Activated T-helper 2 cell treated with anti-CD3 and anti-CD28 coated beads, Interferon-gamma antibody, Interleukin-2, Interleukin-4, amounts not matched to agents 10 μg/mL and 5 μg/mL and 100 μg/mL, durations not matched to agents 14 hours and 24 hours and 36 hours (primary cell): ENCODE measurements at regions of chr19 and their contacts with region 1.

Region 1: GRCh38 chr19:40444192-40445028 is at the start of gene SERTAD3:
- DNase-seq: peak; percentile 96
- H3K4me3 Mint-ChIP-seq: peak within 1 kb of the TSS; percentile 99
- H3K27ac Mint-ChIP-seq: peak within 1 kb of the TSS; percentile 97
- H3K4me1 Mint-ChIP-seq: peaks cover 14% of the 10 kb centered on the region
- H3K27me3 Mint-ChIP-seq: no peaks in the 10 kb centered on the region
- total RNA-seq, gene SERTAD3: 12.5 and 13.1 TPM in 2 replicates

Region 2: GRCh38 chr19:40285353-40286234 is 158.8 kb before region 1 on chr19:
- intact Hi-C with region 1: loop called (anchors 1 kb)
- DNase-seq: peak; percentile 99
- H3K4me3 Mint-ChIP-seq: peak overlapping the region; percentile 85
- H3K27ac Mint-ChIP-seq: peak overlapping the region; percentile 99
- H3K4me1 Mint-ChIP-seq: peaks cover 28% of the 10 kb centered on the region
- H3K27me3 Mint-ChIP-seq: no peaks in the 10 kb centered on the region

Region 3: DNA sequence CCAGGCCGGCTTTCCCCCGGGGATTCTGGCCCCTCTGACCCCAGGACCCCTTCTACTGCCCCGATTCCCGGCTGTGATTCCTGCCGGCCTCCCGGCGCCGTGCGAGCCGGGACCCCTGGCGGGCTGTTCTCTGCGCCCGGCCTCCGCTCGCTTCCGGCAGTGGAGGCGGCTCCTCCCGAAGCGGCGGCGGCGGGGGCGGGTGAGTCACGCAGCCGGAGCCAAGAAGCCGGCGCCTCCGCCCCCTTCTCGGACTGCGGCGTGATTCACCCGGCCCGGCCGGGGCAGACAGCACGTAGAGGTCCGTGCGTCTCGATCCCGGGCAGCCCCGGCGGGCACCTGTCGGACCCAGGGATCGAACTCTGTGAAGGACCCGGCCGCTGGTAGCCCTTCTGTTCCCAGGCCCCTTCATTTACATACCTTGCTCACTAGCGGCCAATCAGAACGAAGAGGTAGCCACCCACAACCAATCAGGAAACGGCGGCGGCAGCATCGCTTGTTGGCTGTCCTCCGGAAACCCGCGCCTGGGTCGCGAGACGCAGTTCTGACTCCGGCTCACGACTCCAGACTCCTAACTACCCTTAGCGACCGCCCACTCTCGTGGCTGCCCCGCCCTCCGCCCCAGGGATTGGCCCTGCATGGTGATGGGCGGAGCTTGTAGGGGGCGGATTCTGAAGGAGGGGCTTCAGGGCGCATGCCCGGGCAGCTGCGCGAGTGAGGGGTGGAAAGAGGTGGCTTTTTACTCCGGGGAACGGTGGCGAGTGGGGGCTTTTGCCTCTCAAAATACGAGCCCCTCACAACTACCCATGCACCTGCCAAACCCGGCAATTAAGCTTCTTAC is 18.7 kb before region 1 on chr19 and contains the start of gene SERTAD1:
- intact Hi-C with region 1: loop called (anchors 1 kb)
- DNase-seq: peak; percentile 100
- H3K4me3 Mint-ChIP-seq: peak within 1 kb of the TSS; percentile 97
- H3K27ac Mint-ChIP-seq: peak within 1 kb of the TSS; percentile 96
- H3K4me1 Mint-ChIP-seq: peaks cover 18% of the 10 kb centered on the region
- H3K27me3 Mint-ChIP-seq: no peaks in the 10 kb centered on the region
- total RNA-seq, gene SERTAD1: 17.5 and 18.1 TPM in 2 replicates

Region 4: DNA sequence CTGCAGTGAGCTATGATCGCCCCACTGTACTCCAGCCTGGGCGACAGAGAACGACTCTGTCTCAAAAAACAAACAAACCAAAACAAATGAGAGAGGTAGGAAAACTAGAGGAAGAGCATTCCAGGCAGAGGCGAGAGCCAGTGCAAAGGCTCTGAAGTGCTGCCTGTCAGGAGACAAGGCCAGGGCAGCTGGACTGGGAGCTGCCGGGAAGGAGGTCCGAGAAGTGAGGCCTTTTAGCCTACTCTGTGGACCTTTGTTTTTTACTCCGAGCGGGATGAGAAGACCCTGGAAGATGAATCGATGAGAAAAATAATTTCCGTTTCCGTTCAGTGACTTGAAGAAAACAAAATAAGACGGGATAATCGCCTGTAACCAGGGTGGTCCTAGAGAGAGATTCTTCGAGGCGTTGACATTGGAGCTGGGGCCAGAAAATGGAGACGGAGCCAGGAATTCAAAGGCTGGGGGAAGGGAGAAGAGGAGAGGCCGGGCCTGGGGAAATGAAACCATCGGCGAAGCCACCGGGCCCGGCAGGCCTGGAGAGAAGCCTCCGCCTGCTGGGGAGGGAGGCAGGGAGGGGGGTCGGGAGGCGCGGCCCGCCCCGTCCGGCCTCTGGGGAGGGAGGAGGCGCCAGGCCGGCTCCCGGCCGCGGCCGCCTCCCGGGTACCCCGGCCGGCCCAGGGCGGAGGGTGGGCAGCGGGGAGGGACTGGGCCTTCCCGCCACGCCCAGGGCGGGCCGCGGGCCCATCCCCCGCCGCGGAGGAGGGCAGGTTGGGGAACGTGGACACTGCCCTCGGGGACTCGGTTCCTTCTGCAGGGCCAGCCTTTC is 10.8 kb before region 1 on chr19:
- intact Hi-C with region 1: loop called (anchors 1 kb)
- DNase-seq: peak; percentile 56
- H3K4me3 Mint-ChIP-seq: peak overlapping the region; percentile 88
- H3K27ac Mint-ChIP-seq: peak overlapping the region; percentile 97
- H3K4me1 Mint-ChIP-seq: peaks cover 7% of the 10 kb centered on the region
- H3K27me3 Mint-ChIP-seq: no peaks in the 10 kb centered on the region

Region 5: DNA sequence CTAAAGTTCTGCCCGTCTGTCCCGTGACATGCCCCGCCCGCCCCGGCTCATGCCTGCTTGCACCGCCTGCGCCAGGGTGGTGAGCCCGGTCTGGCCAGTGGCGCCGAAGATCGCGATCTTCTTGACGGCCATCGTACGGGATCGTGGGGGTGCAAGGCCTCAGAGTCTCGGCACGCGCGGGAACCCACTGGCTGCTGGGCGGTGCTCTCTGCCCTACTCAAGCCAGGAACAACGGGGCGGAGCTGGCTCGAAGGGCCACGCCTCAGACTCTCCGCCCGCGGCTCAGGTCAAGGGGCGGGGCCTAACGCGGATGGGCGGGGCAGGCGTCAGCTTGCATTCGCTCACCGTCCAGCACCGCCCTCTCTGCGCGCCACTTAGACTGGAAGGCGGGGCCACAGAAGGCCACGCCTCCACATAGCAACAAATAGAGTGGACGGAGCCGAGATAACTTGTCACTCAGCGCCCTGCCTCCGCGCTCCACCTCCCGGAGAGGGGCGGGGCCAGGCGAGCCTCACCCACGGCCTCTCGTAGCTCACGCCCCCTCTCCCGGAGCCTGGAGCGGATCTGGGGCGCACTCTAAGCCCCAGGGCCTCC is 21.2 kb after region 1 on chr19 and contains the start of gene BLVRB:
- intact Hi-C with region 1: loop called (anchors 1 kb)
- DNase-seq: peak; percentile 99
- H3K4me3 Mint-ChIP-seq: peak within 1 kb of the TSS; percentile 87
- H3K27ac Mint-ChIP-seq: peak within 1 kb of the TSS; percentile 78
- H3K4me1 Mint-ChIP-seq: peaks cover 21% of the 10 kb centered on the region
- H3K27me3 Mint-ChIP-seq: peaks cover 24% of the 10 kb centered on the region
- total RNA-seq, gene BLVRB: 10.4 and 11.3 TPM in 2 replicates

Region 6: DNA sequence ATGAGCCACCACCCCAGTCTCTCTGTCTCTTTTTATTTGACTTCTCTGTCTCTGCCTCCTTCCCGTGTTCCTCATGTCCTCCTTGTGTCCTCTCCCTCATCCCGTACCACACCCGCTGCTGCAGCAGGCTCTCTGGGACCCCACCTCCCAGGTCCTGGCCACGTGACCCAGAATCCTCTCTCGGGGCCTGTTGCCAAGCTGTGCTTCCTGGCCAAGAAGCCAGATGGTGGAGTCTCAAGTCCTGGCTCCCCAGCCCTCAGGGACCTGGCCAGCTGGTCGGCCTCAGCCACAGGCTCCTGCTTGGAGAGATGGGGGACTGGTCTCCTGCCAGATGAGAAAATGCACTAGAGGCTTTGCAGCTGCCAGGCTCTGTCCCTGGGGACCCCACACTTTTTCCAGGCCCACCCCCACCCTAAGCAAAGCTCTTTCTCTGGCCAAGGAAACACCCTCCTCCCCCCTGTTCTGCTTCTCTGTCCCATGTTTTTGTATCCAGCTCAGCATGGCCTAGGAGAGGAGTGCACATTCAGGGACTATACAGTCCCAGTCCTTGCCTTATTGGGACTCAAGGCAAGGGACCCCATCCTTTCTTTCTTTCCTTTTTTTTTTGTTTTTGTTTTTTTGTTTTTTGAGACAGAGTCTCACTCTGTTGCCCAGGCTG is 97.9 kb after region 1 on chr19:
- intact Hi-C with region 1: no loop called
- DNase-seq: no peak
- H3K4me3 Mint-ChIP-seq: no peak overlapping the region
- H3K27ac Mint-ChIP-seq: no peak overlapping the region
- H3K4me1 Mint-ChIP-seq: no peaks in the 10 kb centered on the region
- H3K27me3 Mint-ChIP-seq: peaks cover 1% of the 10 kb centered on the region

Region 7: DNA sequence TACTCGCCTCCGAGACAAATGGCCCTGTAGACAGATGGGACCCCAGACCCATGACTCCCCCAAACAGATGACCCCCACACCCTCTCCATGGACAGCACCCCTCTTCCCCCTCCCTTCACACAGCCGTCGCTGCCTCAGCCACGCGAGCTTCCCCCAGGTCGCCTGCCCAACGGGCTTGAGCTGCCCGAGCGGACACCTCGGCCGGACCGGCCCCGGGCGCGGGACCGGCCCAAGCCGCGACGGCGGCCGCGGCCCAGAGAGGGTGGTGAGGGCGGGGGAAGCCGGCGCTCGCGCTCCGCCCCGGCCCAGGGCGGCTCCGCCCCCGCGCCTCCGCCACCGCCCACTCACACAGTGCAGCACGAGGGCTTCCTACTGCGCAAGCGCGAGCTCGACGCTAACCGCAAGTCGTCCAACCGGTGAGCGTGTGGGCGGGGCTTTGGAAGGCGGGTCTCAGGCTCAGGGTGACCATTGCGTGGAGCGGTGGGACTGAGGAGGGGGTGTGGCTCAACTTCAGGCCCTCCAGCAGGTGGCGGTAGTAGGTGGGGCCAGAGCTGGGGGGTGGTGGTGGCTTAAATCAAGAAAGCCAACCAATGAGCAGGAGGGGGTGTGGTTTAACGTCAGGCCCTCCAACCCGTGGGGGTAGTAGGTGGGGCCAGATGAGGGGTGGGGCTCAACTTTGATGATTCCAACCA is 126.0 kb after region 1 on chr19:
- intact Hi-C with region 1: loop called (anchors 1 kb)
- DNase-seq: peak; percentile 98
- H3K4me3 Mint-ChIP-seq: peak overlapping the region; percentile 54
- H3K27ac Mint-ChIP-seq: peak overlapping the region; percentile 36
- H3K4me1 Mint-ChIP-seq: peaks cover 9% of the 10 kb centered on the region
- H3K27me3 Mint-ChIP-seq: peaks cover 38% of the 10 kb centered on the region

Region 8: GRCh38 chr19:40609561-40610395 is 165.4 kb after region 1 on chr19:
- intact Hi-C with region 1: loop called (anchors 2 kb)
- DNase-seq: peak; percentile 87
- H3K4me3 Mint-ChIP-seq: peak overlapping the region; percentile 80
- H3K27ac Mint-ChIP-seq: peak overlapping the region; percentile 93
- H3K4me1 Mint-ChIP-seq: peaks cover 35% of the 10 kb centered on the region
- H3K27me3 Mint-ChIP-seq: no peaks in the 10 kb centered on the region